ENCODE measurements at regions of chr1 and their contacts with region 1.

Region 1: GRCh38 chr1:228082135-228082891 is at the start of gene ARF1:
- DNase-seq: peak; percentile 95 to 96
- ATAC-seq: peak; percentile 96
- H3K4me3 ChIP-seq: peak within 1 kb of the TSS; percentile 46 to 96
- H3K27ac ChIP-seq: peak within 1 kb of the TSS; percentile 58 to 88
- H3K4me1 ChIP-seq: peaks cover 2 to 10% of the 10 kb centered on the region in 2 donors
- H3K27me3 ChIP-seq: no peaks in the 10 kb centered on the region
- total RNA-seq, gene ARF1: 291 to 356 TPM

Region 2: DNA sequence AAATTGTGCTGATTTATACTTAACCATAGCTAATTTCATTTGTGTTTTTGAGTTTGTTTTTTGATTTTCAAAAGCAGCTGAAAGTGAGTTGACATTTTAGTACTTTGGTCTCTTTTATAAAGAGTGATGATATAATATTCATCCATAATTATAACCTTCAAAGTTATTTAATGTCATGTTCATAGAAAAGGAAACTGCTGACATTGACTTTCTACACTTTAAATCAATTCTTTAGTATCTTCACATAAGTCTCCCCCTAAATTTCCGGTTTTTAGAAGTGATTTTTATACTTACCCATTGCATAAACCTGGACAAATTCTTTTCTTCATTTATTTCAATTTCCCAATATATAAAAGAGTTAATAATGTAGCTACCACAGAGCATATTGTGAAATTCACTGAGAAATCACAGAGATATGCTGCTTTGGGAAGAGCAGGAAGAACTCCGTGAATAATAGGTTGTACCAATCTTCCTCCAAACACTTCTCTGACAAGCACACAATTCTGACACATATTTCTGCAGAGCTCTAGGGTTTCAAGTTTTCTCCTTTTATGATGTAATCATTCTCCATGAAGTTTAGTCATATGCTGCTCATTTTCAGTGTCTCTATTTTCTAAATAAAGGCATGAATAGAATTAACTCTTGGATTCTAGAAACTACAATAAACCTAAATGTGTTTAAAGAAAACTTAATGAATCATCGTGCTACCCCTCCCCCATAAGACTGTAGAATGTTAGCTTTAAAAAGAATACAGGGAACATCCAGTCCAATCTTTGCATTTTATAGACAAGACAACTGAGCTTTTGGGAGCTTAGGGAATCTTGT is 738.4 kb before region 1 on chr1:
- intact Hi-C with region 1: loop called in 1 of 2 experiments (anchors 10 kb)
- DNase-seq: no peak
- ATAC-seq: no peak
- H3K4me3 ChIP-seq: no peak overlapping the region
- H3K27ac ChIP-seq: no peak overlapping the region
- H3K4me1 ChIP-seq: no peaks in the 10 kb centered on the region
- H3K27me3 ChIP-seq: no peaks in the 10 kb centered on the region

Region 3: DNA sequence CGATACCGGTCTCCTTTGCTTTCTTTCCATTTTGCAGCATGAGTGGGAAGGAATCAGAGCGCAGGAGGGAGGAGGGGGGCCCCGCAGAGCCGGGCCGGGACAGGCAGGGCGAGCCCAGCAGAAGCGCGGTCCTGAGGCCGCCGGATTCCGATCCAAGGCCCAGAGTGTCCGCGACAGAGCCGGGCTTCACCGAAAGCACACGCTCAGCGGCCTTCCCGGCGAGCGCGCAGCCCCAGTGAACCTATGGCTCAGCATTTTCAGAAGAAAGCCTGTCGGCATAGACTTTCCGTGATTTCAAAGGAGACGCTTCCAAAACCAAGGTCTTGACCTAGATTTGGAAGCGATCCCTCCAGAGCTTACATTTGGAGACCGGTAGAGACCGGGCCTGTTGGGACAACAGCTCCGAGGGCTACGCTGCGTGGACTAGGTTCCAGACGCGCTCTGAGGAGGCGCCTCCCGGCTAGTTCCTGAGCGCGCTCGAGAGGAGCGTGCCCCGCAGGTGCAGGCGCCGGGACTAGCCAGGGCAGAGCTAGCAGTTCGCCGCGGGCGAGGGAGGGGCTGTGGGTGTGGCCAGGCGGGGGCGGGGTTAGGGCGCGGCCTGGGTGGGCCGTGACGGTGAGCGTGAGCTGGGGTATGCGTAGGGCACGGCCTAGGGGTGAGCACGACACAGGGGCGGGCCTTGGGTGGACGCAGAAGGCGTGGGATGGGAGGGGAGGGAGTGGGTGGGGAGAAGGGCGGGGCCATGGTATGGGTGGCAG is 294.6 kb before region 1 on chr1:
- intact Hi-C with region 1: loop called (anchors 2 to 5 kb)
- DNase-seq: peak; percentile 94 to 96
- ATAC-seq: peak; percentile 95
- H3K4me3 ChIP-seq: peak overlapping the region; percentile 37 to 78
- H3K27ac ChIP-seq: peak overlapping the region in 1 of 2 donors; percentile 55
- H3K4me1 ChIP-seq: no peaks in the 10 kb centered on the region
- H3K27me3 ChIP-seq: no peaks in the 10 kb centered on the region

Region 4: GRCh38 chr1:228109073-228109961 is 27.0 kb after region 1 on chr1 and contains the start of gene MRPL55:
- intact Hi-C with region 1: loop called in 1 of 2 experiments (anchors 2 kb)
- DNase-seq: peak; percentile 97 to 99
- ATAC-seq: peak; percentile 99
- H3K4me3 ChIP-seq: peak within 1 kb of the TSS; percentile 36 to 69
- H3K27ac ChIP-seq: peak within 1 kb of the TSS in 1 of 2 donors; percentile 66
- H3K4me1 ChIP-seq: no peaks in the 10 kb centered on the region
- H3K27me3 ChIP-seq: no peaks in the 10 kb centered on the region
- total RNA-seq, gene MRPL55: 27.4 to 35.4 TPM

Measured in aorta (tissue), 5 donors.